Panc1 (cell line): ENCODE measurements at regions of chr1 and their contacts with region 1.

Region 1: GRCh38 chr1:10528066-10529014 is 53.6 kb downstream of the PEX14 start:
- DNase-seq: peak; percentile 92
- ATAC-seq: peak; percentile 93
- H3K4me3 ChIP-seq: peak overlapping the region; percentile 7 to 38; a peak in 3 of 4 replicates
- H3K27ac ChIP-seq: peak overlapping the region; percentile 92
- H3K4me1 ChIP-seq: peaks cover 61% of the 10 kb centered on the region
- H3K27me3 ChIP-seq: no peaks in the 10 kb centered on the region
- CTCF ChIP-seq: no peak

Region 2: GRCh38 chr1:10117865-10118264 is 410.5 kb before region 1 on chr1:
- CTCF ChIA-PET with region 1: no interaction called
- POLR2A ChIA-PET with region 1: no interaction called
- in situ Hi-C with region 1: no loop called
- intact Hi-C with region 1: no loop called
- DNase-seq: no peak
- ATAC-seq: no peak
- H3K4me3 ChIP-seq: no peak overlapping the region
- H3K27ac ChIP-seq: no peak overlapping the region
- H3K4me1 ChIP-seq: no peaks in the 10 kb centered on the region
- H3K27me3 ChIP-seq: no peaks in the 10 kb centered on the region
- CTCF ChIP-seq: no peak

Region 3: GRCh38 chr1:10686404-10687040 is 158.2 kb after region 1 on chr1:
- CTCF ChIA-PET with region 1: no interaction called
- POLR2A ChIA-PET with region 1: no interaction called
- in situ Hi-C with region 1: no loop called
- intact Hi-C with region 1: loop called (anchors 5 kb)
- DNase-seq: no peak
- ATAC-seq: peak; percentile 40
- H3K4me3 ChIP-seq: no peak overlapping the region
- H3K27ac ChIP-seq: peak overlapping the region; percentile 48; the same call in 1 of the 2 replicates
- H3K4me1 ChIP-seq: peaks cover 31% of the 10 kb centered on the region
- H3K27me3 ChIP-seq: no peaks in the 10 kb centered on the region
- CTCF ChIP-seq: no peak